Posterior vena cava (tissue), 2 donors: ENCODE measurements at regions of chr6 and their contacts with region 1.

Region 1: GRCh38 chr6:168388641-168389381 is 52.2 kb upstream of the SMOC2 start:
- DNase-seq: no peak

Region 2: GRCh38 chr6:167937948-167938911 is 450.6 kb before region 1 on chr6:
- intact Hi-C with region 1: no loop called
- DNase-seq: no peak

Region 3: GRCh38 chr6:168439794-168440450 is 51.1 kb after region 1 on chr6:
- intact Hi-C with region 1: loop called in 1 of 2 experiments (anchors 10 kb)
- DNase-seq: no peak